OCI-LY7 (cell line): ENCODE measurements at regions of chr1 and their contacts with region 1.

Region 1: DNA sequence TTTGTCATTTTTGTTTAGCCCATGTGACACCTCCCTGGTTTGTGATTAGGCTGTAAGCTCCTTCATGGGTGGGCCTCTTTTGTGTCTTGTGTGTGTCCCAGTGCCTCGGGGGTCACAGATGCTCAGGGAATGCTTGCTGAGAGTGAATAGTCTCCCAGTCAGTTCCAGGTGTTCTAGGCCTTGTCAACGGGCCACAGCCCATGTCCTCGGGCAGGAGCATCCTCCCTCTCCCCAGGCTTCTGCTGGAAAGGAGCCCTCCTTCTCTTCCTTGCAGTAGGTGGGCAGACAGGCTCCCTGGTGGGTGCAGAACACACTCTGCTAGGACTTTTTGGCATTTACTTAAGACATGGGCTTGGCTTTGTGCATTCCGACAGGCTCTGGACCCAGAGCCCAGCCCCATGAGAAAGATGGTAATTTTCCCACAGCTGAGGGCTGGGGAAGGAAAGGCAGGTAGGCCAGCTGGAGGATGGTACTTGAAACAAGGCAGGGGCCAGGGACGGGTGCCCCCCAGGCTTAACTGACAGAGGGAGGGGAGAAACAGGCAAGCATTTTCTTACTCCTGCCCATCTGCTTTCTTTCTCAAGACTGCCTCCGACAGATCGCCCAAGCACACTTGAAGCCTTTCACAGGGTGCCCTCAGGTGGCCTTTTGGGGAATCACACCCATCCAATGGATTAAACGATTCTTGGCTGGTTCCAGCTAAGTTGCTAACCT is 7.1 kb upstream of the CPLANE2 start:
- DNase-seq: peak; percentile 84
- H3K4me3 ChIP-seq: no peak overlapping the region
- H3K27ac ChIP-seq: no peak overlapping the region
- H3K4me1 ChIP-seq: peaks cover 10% of the 10 kb centered on the region
- CTCF ChIP-seq: peak; percentile 91

Region 2: DNA sequence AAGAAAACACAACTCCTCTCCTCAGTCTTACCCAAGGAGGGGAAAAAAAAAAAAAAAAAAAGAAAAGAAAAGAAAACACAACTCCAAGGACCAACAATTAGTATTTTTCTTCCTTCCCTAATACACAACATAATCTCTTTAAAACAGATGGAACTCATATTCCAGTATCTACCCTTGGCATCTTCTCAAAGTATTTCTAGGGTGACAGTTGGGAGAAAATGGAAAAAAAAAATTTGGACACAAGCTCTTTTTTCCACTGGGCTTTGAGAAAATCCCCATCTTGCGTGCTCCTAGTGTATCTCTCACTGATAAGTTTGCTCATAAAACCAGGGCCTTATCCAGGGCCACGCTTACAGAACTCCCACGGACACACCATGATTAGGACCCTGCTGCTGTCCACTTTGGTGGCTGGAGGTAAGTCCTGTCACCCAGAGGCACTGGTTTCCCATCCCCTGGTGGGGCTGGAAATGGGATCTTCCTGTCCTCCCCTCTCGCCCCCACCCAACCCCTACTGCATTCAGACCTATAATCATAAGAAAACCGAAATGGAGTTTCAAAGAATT is 768.3 kb before region 1 on chr1 and contains the start of gene CELA2B:
- CTCF ChIA-PET with region 1: no interaction called
- POLR2A ChIA-PET with region 1: no interaction called
- intact Hi-C with region 1: no loop called
- DNase-seq: no peak
- H3K4me3 ChIP-seq: no peak within 1 kb of the TSS
- H3K27ac ChIP-seq: no peak within 1 kb of the TSS
- H3K4me1 ChIP-seq: no peaks in the 10 kb centered on the region
- CTCF ChIP-seq: no peak
- total RNA-seq, gene CELA2B: not detected in 2 replicates

Region 3: GRCh38 chr1:16078925-16079656 is 165.0 kb before region 1 on chr1:
- CTCF ChIA-PET with region 1: no interaction called
- POLR2A ChIA-PET with region 1: interaction called, 7 read pairs
- intact Hi-C with region 1: loop called (anchors 2 kb)
- DNase-seq: peak; percentile 77
- H3K4me3 ChIP-seq: no peak overlapping the region
- H3K27ac ChIP-seq: no peak overlapping the region
- H3K4me1 ChIP-seq: peaks cover 6% of the 10 kb centered on the region
- CTCF ChIP-seq: peak; percentile 91

Region 4: DNA sequence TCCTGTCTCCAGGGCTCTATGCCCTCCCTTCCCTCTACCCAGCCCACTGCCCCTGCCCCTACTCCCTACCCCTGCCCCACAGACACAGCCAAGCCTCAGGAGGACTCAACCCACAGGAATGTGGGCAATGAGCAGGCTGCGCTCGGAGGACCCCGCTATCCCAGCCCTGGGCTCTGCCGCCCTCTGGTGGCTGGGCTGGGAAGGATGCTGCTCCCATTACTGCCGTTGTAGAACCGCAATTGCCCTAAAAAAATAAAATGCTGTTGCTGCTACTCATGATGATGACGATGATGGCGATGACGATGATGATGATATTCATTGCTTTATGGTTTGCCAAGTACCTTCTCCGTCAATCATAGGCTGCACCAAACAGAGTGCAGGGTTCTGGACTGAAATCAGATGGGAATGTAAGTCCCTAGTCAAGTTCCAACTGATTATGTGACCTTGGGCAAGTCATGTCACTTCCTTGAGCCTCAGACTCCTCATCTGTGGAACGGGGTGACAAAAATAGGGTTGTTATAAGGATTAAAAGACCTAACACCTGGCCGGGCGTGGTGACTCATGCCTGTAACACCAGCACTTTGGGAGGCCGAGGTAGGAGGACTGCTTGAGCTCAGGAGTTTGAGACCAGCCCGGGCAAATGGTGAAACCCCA is 56.2 kb before region 1 on chr1:
- CTCF ChIA-PET with region 1: no interaction called
- POLR2A ChIA-PET with region 1: no interaction called
- intact Hi-C with region 1: loop called (anchors 1 kb)
- DNase-seq: peak; percentile 66
- H3K4me3 ChIP-seq: no peak overlapping the region
- H3K27ac ChIP-seq: no peak overlapping the region
- H3K4me1 ChIP-seq: no peaks in the 10 kb centered on the region
- CTCF ChIP-seq: peak; percentile 99

Region 5: GRCh38 chr1:16206547-16207317 is 37.4 kb before region 1 on chr1:
- CTCF ChIA-PET with region 1: no interaction called
- POLR2A ChIA-PET with region 1: no interaction called
- intact Hi-C with region 1: loop called (anchors 2 kb)
- DNase-seq: peak; percentile 95
- H3K4me3 ChIP-seq: peak overlapping the region; percentile 75
- H3K27ac ChIP-seq: peak overlapping the region; percentile 65
- H3K4me1 ChIP-seq: peaks cover 6% of the 10 kb centered on the region
- CTCF ChIP-seq: no peak

Region 6: GRCh38 chr1:16342331-16343062 is 98.4 kb after region 1 on chr1:
- CTCF ChIA-PET with region 1: no interaction called
- POLR2A ChIA-PET with region 1: no interaction called
- intact Hi-C with region 1: no loop called
- DNase-seq: no peak
- H3K4me3 ChIP-seq: no peak overlapping the region
- H3K27ac ChIP-seq: no peak overlapping the region
- H3K4me1 ChIP-seq: no peaks in the 10 kb centered on the region
- CTCF ChIP-seq: no peak